ENCODE measurements at regions of chr12 and their contacts with region 1.

Region 1: GRCh38 chr12:10749700-10750384 is 26.7 kb upstream of the YBX3 start:
- DNase-seq: peak; percentile 79
- ATAC-seq: peak; percentile 97
- H3K4me3 Mint-ChIP-seq: peak overlapping the region; percentile 46
- H3K27ac Mint-ChIP-seq: peak overlapping the region; percentile 49
- H3K4me1 Mint-ChIP-seq: peaks cover 9% of the 10 kb centered on the region
- H3K27me3 Mint-ChIP-seq: peaks cover 28% of the 10 kb centered on the region

Region 2: DNA sequence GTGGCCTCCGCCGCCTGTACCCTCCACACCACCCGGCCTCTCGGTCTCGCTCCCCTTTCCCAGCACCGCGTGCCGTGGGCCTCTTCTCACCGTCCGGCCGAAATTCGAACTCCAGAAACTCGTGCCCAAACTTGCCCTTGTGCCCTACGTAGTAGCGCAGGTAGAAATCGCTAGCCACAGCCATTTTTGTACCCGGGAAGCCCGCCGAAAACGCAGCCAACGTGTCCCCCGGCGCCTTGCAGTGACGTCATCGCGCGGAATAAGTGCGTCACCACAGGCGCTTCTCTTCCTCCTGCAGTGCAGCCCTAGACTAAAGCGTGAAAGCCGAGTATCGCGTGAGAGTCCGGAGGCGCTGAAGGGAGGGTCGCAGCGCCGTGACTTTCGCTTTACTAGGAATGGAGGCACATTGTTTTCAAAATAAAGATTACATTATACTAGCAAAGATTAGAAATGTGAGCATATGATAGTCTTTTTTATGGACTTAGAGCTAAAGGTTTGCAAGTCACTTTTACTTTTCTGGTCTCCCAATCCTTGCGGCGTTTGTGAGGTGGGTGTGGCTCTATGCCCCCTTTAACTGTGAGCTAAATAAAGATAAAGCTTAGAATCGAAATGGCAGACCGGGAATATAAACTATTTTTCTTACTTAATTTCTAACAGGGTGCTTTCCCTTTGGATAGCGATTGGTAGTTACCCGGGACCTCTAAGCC is 136.3 kb before region 1 on chr12 and contains the start of gene MAGOHB:
- CTCF ChIA-PET with region 1: interaction called, 4 read pairs
- POLR2A ChIA-PET with region 1: no interaction called
- intact Hi-C with region 1: loop called (anchors 1 kb)
- DNase-seq: peak; percentile 99
- ATAC-seq: peak; percentile 96
- H3K4me3 Mint-ChIP-seq: peak within 1 kb of the TSS; percentile 99
- H3K27ac Mint-ChIP-seq: peak within 1 kb of the TSS; percentile 100
- H3K4me1 Mint-ChIP-seq: peaks cover 25% of the 10 kb centered on the region
- H3K27me3 Mint-ChIP-seq: peaks cover 6% of the 10 kb centered on the region
- total RNA-seq, gene MAGOHB: 66.3 to 89.3 TPM

Region 3: GRCh38 chr12:10721651-10722501 is 28.0 kb before region 1 on chr12:
- CTCF ChIA-PET with region 1: interaction called, 14 read pairs
- POLR2A ChIA-PET with region 1: no interaction called
- intact Hi-C with region 1: loop called in 1 of 2 experiments (anchors 1 kb)
- DNase-seq: peak; percentile 74
- ATAC-seq: peak; percentile 68
- H3K4me3 Mint-ChIP-seq: peak overlapping the region; percentile 91
- H3K27ac Mint-ChIP-seq: peak overlapping the region; percentile 91
- H3K4me1 Mint-ChIP-seq: peaks cover 25% of the 10 kb centered on the region
- H3K27me3 Mint-ChIP-seq: peaks cover 29% of the 10 kb centered on the region

Region 4: DNA sequence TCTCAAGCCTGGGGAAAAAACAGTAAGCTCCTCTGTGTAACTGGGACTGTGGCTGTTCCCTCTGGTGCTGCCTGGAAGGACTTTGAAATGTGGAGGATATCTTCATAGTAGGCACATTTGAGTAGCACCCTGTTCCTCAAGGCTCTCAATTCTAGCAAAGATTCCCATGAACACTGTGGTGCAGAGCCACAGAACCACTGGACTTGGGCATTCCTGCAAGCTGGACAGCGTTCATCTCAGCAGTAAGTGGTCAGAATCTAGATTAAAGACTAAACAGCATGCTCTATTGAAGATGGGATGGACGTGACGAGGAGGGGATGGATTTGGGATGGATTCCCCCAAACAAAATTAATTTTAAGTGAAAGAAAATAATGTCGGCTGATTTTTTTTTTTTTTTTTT is 17.3 kb before region 1 on chr12:
- CTCF ChIA-PET with region 1: interaction called, 14 read pairs
- POLR2A ChIA-PET with region 1: no interaction called
- intact Hi-C with region 1: no loop called
- DNase-seq: no peak
- ATAC-seq: no peak
- H3K4me3 Mint-ChIP-seq: no peak overlapping the region
- H3K27ac Mint-ChIP-seq: no peak overlapping the region
- H3K4me1 Mint-ChIP-seq: peaks cover 5% of the 10 kb centered on the region
- H3K27me3 Mint-ChIP-seq: peaks cover 20% of the 10 kb centered on the region

Region 5: GRCh38 chr12:11486623-11487444 is 737.0 kb after region 1 on chr12:
- CTCF ChIA-PET with region 1: interaction called, 3 read pairs
- POLR2A ChIA-PET with region 1: no interaction called
- intact Hi-C with region 1: loop called in 1 of 2 experiments (anchors 5 kb)
- DNase-seq: peak; percentile 90
- ATAC-seq: peak; percentile 86
- H3K4me3 Mint-ChIP-seq: no peak overlapping the region
- H3K27ac Mint-ChIP-seq: no peak overlapping the region
- H3K4me1 Mint-ChIP-seq: peaks cover 5% of the 10 kb centered on the region
- H3K27me3 Mint-ChIP-seq: no peaks in the 10 kb centered on the region

Measured in activated CD4-positive, alpha-beta T cell treated with anti-CD3 and anti-CD28 coated beads for 36 hours (primary cell).